CD8-positive, alpha-beta T cell (primary cell): ENCODE measurements at regions of chr17 and their contacts with region 1.

Region 1: DNA sequence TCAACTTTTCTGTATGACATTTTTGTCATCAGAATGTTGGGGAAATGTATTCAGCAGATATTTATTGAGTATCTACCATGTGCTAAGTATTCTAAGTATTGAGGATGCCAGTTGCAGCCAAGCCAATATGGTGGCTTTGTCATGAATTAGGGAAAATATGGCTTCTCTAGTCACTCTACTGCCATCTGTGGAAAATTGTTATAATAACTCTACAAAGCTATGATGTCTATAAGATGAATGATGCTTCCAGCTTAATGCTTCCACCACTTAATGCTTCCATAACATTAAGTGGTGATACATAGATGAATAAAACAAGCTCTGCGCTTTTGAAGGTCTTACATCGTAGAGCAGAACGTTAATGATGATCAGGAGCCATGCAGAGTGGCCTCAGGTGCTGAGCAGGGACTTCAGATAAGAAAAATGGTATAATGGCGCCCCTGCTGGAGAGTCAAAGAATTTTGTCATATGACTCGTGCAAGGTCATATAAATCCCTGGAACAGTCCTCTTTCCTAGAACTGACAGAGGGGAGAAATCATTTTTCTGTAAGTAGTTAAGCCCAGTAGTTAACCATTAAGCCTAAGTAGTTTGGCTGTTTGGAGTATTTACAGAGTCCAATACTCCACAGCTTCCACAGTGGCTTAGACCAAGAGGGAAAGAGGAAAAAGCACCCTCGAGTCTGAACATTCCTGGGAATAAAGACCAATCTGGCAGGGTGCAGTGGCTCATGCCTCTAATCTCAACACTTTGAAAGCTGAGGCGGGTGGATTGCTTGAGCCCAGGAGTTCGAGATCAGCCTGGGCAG is 2.7 kb upstream of the TMIGD1 start:
- DNase-seq: peak in 8 of 9 experiments; percentile 42 to 81 (median 62)
- ATAC-seq: peak; percentile 40
- H3K4me3 ChIP-seq: no peak overlapping the region
- H3K4me3 Mint-ChIP-seq: no peak overlapping the region
- H3K27ac ChIP-seq: no peak overlapping the region
- H3K27ac Mint-ChIP-seq: no peak overlapping the region
- H3K4me1 ChIP-seq: peaks cover 21% of the 10 kb centered on the region
- H3K4me1 Mint-ChIP-seq: peaks cover 30% of the 10 kb centered on the region
- H3K27me3 ChIP-seq: no peaks in the 10 kb centered on the region
- H3K27me3 Mint-ChIP-seq: no peaks in the 10 kb centered on the region
- CTCF ChIP-seq: peak; percentile 96

Region 2: DNA sequence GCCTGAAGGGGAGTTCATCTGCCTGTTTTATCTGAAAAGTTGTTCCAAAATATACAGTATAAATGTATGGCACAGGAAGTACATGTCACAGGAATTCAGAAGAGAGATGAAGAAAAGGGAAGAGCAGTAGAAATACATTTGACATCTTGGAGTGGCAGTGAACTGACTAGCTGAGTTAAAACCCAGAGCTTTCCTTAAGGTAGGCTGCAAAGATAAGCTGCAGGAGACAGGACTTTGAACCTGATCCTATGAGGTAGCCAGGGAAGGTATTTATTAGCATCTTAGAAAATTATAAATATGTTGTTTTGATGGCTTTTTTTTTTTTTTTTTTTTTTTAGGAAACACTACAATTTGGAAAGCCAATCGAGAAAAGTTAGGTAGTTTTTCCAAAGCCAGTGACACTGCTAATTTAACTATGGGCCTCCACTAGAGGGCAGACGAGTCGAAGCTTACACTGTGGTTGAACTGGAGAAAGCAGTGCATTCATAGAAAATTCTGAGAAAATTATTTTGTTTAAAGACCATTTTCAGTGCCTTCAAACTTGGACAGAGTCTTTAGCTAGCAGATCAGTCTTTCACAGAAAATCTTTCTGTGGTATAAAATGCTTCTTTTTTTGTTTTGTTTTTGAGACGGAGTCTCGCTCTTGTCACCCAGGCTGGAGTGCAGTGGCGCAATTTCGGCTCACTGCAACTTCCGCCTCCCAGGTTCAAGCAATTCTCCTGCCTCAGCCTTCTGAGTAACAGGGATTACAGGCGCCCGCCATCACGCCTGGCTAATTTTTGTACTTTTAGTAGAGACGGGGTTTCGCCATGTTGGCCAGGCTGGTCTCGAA is 528.8 kb before region 1 on chr17:
- CTCF ChIA-PET with region 1: no interaction called
- POLR2A ChIA-PET with region 1: no interaction called
- intact Hi-C with region 1: no loop called
- DNase-seq: peak; percentile 30 to 81 (median 73)
- ATAC-seq: peak; percentile 81
- H3K4me3 ChIP-seq: no peak overlapping the region
- H3K4me3 Mint-ChIP-seq: no peak overlapping the region
- H3K27ac ChIP-seq: no peak overlapping the region
- H3K27ac Mint-ChIP-seq: no peak overlapping the region
- H3K4me1 ChIP-seq: no peaks in the 10 kb centered on the region
- H3K4me1 Mint-ChIP-seq: peaks cover 15% of the 10 kb centered on the region
- H3K27me3 ChIP-seq: no peaks in the 10 kb centered on the region
- H3K27me3 Mint-ChIP-seq: no peaks in the 10 kb centered on the region
- CTCF ChIP-seq: peak; percentile 94

Region 3: DNA sequence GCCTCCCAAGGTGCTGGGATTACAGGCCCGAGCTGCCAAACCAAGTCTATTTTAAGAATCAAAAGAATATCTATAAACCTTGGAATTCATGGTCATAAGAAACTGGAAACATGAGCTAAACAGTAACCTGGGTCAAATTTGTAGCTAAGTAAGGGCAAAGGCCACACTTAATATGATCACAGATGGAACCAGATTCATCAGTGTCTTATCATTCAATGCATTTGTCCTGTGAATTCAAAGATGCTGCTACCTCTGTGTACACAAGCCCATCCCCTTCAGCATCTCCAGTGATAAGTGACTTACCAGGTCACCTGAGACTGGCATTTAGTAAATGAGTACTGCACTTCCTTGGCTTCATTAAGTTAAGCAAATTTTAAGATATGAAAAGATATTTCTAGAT is 514.7 kb before region 1 on chr17:
- CTCF ChIA-PET with region 1: no interaction called
- POLR2A ChIA-PET with region 1: no interaction called
- intact Hi-C with region 1: no loop called
- DNase-seq: no peak
- ATAC-seq: no peak
- H3K4me3 ChIP-seq: no peak overlapping the region
- H3K4me3 Mint-ChIP-seq: no peak overlapping the region
- H3K27ac ChIP-seq: no peak overlapping the region
- H3K27ac Mint-ChIP-seq: no peak overlapping the region
- H3K4me1 ChIP-seq: peaks cover 4% of the 10 kb centered on the region
- H3K4me1 Mint-ChIP-seq: peaks cover 20% of the 10 kb centered on the region
- H3K27me3 ChIP-seq: no peaks in the 10 kb centered on the region
- H3K27me3 Mint-ChIP-seq: no peaks in the 10 kb centered on the region
- CTCF ChIP-seq: no peak

Region 4: GRCh38 chr17:30104575-30105339 is 231.8 kb before region 1 on chr17:
- CTCF ChIA-PET with region 1: interaction called, 156 read pairs
- POLR2A ChIA-PET with region 1: no interaction called
- intact Hi-C with region 1: loop called (anchors 1 to 5 kb)
- DNase-seq: peak; percentile 44 to 85 (median 71)
- ATAC-seq: peak; percentile 95
- H3K4me3 ChIP-seq: peak overlapping the region; percentile 43 to 45
- H3K4me3 Mint-ChIP-seq: peak overlapping the region; percentile 85
- H3K27ac ChIP-seq: no peak overlapping the region
- H3K27ac Mint-ChIP-seq: no peak overlapping the region
- H3K4me1 ChIP-seq: no peaks in the 10 kb centered on the region
- H3K4me1 Mint-ChIP-seq: peaks cover 6% of the 10 kb centered on the region
- H3K27me3 ChIP-seq: no peaks in the 10 kb centered on the region
- H3K27me3 Mint-ChIP-seq: peaks cover 3% of the 10 kb centered on the region
- CTCF ChIP-seq: peak; percentile 93

Region 5: DNA sequence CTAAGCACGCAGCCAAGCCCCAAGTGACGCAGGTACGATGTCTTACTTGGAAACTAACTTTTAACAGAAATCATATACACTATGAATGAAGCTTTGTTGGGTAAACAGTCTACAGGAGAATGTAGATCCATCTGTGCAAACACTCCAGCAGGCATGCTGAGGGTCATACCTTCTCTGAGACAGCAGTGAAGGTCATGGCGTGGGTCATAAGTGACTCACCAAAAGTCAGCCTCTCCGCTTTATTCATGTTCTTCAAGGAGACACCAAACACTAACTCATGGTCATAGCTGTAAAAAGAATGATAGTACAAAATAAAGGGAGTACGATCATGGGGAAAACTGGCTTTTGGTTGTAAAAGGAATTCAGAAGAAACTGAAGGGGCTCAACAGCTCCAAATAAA is 65.5 kb before region 1 on chr17:
- CTCF ChIA-PET with region 1: interaction called, 15 read pairs
- POLR2A ChIA-PET with region 1: no interaction called
- intact Hi-C with region 1: loop called in 1 of 2 experiments (anchors 5 kb)
- DNase-seq: no peak
- ATAC-seq: no peak
- H3K4me3 ChIP-seq: no peak overlapping the region
- H3K4me3 Mint-ChIP-seq: no peak overlapping the region
- H3K27ac ChIP-seq: no peak overlapping the region
- H3K27ac Mint-ChIP-seq: no peak overlapping the region
- H3K4me1 ChIP-seq: no peaks in the 10 kb centered on the region
- H3K4me1 Mint-ChIP-seq: no peaks in the 10 kb centered on the region
- H3K27me3 ChIP-seq: no peaks in the 10 kb centered on the region
- H3K27me3 Mint-ChIP-seq: no peaks in the 10 kb centered on the region
- CTCF ChIP-seq: no peak

Region 6: DNA sequence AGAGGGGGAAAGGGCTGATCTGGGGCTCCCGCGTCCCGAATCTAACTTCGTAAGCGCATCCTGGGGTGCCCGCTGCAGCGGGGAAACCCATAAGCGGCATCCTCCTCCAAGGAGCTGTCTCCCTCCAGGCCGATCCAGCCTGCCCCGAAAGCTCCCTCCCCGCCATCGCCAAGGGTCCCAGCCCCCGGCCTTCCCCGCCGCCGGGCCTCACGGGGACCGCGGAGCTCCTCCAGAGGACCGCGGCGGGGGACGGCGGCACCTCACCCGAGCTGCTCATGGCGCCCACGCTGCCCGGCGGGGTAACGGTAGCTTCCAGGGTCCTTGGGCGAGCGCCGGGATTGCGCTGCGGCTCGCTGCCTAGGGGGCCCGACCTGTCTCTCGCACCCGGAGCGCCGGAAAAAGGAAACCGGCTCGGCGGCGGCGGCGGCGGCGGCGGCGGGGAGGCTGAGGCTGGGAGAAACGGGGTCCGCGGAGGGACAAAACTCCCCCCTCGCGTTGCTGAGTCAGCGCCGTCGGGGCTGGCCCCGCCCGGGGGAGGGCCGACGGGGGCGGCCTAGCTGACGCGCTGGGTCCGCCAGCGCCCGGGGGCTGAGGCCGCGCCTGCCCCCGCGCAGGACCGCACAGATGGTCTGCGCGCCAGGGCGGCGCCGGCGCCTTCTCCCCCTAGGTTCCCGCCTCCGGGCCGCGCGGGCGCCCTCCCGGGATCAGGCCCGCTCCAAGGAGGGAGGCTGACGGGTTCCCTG is 44.9 kb before region 1 on chr17 and contains the start of gene BLMH:
- CTCF ChIA-PET with region 1: interaction called, 57 read pairs
- POLR2A ChIA-PET with region 1: interaction called, 8 read pairs
- intact Hi-C with region 1: loop called (anchors 1 kb)
- DNase-seq: peak; percentile 54 to 89 (median 83)
- ATAC-seq: peak; percentile 88
- H3K4me3 ChIP-seq: peak within 1 kb of the TSS; percentile 88 to 91
- H3K4me3 Mint-ChIP-seq: peak within 1 kb of the TSS; percentile 93
- H3K27ac ChIP-seq: peak within 1 kb of the TSS; percentile 38 to 44
- H3K27ac Mint-ChIP-seq: peak within 1 kb of the TSS; percentile 88
- H3K4me1 ChIP-seq: peaks cover 19% of the 10 kb centered on the region
- H3K4me1 Mint-ChIP-seq: peaks cover 18% of the 10 kb centered on the region
- H3K27me3 ChIP-seq: no peaks in the 10 kb centered on the region
- H3K27me3 Mint-ChIP-seq: no peaks in the 10 kb centered on the region
- CTCF ChIP-seq: no peak
- total RNA-seq, gene BLMH: 32.6 to 33.3 TPM

Region 7: GRCh38 chr17:30323895-30324319 is 12.7 kb before region 1 on chr17:
- CTCF ChIA-PET with region 1: interaction called, 50 read pairs
- POLR2A ChIA-PET with region 1: interaction called, 7 read pairs
- intact Hi-C with region 1: loop called in 1 of 2 experiments (anchors 1 kb)
- DNase-seq: peak in 8 of 9 experiments; percentile 12 to 66 (median 46)
- ATAC-seq: peak; percentile 63
- H3K4me3 ChIP-seq: no peak overlapping the region
- H3K4me3 Mint-ChIP-seq: peak overlapping the region; percentile 11
- H3K27ac ChIP-seq: peak overlapping the region; percentile 0 to 60
- H3K27ac Mint-ChIP-seq: peak overlapping the region; percentile 91
- H3K4me1 ChIP-seq: peaks cover 24% of the 10 kb centered on the region
- H3K4me1 Mint-ChIP-seq: peaks cover 30% of the 10 kb centered on the region
- H3K27me3 ChIP-seq: no peaks in the 10 kb centered on the region
- H3K27me3 Mint-ChIP-seq: no peaks in the 10 kb centered on the region
- CTCF ChIP-seq: no peak

Region 8: DNA sequence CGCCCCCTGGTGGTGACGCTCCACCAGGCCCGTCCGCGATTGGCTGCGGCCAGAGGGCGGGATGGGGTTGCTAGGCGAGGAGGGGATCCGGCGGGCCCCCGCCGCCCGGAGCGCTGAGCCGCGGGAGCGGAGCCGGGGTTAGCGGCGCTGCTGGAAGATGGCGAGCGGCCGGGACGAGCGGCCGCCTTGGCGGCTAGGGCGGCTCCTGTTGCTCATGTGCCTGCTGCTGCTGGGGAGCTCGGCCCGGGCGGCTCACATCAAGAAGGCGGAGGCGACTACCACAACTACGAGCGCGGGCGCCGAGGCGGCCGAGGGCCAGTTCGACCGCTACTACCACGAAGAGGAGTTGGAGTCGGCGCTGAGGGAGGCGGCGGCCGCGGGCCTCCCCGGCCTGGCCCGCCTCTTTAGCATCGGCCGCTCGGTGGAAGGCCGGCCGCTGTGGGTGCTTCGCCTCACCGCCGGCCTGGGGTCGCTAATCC is 42.3 kb after region 1 on chr17 and contains the start of gene CPD:
- CTCF ChIA-PET with region 1: interaction called, 19 read pairs
- POLR2A ChIA-PET with region 1: interaction called, 7 read pairs
- intact Hi-C with region 1: loop called (anchors 1 to 2 kb)
- DNase-seq: peak; percentile 92 to 99 (median 98)
- ATAC-seq: peak; percentile 93
- H3K4me3 ChIP-seq: peak within 1 kb of the TSS; percentile 51 to 76
- H3K4me3 Mint-ChIP-seq: peak within 1 kb of the TSS; percentile 88
- H3K27ac ChIP-seq: peak within 1 kb of the TSS; percentile 65 to 94
- H3K27ac Mint-ChIP-seq: peak within 1 kb of the TSS; percentile 93
- H3K4me1 ChIP-seq: peaks cover 53% of the 10 kb centered on the region
- H3K4me1 Mint-ChIP-seq: peaks cover 56% of the 10 kb centered on the region
- H3K27me3 ChIP-seq: no peaks in the 10 kb centered on the region
- H3K27me3 Mint-ChIP-seq: no peaks in the 10 kb centered on the region
- CTCF ChIP-seq: no peak
- total RNA-seq, gene CPD: 40.9 to 42.1 TPM

Region 9: DNA sequence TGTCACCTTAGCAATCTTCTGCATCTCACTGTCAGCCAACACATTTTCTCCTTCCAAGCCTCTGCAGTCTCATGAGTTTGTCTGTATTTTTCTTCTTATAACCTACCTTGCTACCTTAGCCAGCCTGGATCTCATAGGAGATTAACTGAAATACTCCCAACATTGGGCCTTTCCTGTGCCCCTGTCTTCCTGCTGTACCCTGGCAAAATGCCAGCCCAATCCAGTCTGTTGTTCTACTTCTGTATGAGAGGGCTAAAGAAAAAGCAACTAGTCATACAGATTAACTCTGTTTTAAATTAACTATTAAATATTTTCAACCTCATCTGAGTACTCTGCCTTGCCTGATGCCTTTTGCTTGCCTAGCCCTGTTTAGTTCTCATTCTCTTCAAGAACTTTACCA is 159.0 kb after region 1 on chr17:
- CTCF ChIA-PET with region 1: no interaction called
- POLR2A ChIA-PET with region 1: no interaction called
- intact Hi-C with region 1: no loop called
- DNase-seq: no peak
- ATAC-seq: no peak
- H3K4me3 ChIP-seq: no peak overlapping the region
- H3K4me3 Mint-ChIP-seq: no peak overlapping the region
- H3K27ac ChIP-seq: no peak overlapping the region
- H3K27ac Mint-ChIP-seq: no peak overlapping the region
- H3K4me1 ChIP-seq: no peaks in the 10 kb centered on the region
- H3K4me1 Mint-ChIP-seq: peaks cover 23% of the 10 kb centered on the region
- H3K27me3 ChIP-seq: no peaks in the 10 kb centered on the region
- H3K27me3 Mint-ChIP-seq: no peaks in the 10 kb centered on the region
- CTCF ChIP-seq: no peak

Region 10: DNA sequence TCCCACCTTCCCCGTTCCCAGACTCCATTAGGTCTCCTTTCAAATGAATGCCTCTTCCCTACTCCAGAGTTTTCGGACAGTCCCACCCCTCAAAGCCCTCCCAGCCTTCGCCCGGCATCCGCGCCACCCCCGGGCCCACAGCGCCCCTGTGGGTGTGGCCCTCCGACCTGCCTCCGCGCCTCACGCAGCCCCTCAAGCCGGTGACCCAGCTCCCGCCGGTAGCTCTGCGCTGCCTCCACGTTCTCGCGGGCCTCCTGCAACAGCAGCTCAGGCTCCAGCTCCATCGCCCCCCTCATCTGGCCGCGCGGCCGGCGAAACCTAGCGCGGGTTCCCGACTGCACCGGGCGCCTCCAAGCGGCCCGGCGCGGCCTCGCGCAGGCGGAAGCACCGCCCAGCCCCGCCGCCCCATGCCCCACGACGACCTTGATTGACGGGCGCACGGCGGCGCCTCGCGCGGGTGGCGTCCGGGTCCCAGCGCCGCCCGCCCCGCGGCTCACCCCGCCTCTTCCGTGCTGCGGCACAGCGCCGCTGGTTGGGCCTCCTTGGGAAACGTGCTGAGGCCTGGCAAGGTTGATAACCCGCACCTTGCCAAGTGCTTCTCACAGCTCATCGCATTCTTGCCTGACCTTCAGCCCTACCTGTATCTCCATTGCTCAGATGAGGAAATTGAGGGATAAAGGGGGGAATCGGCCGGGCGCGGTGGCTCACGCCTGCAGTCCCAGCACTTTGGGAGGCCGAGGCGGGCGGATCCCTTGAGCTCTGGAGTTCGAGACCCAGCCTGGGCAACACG is 488.0 kb after region 1 on chr17 and contains the start of gene CRLF3:
- CTCF ChIA-PET with region 1: no interaction called
- POLR2A ChIA-PET with region 1: no interaction called
- intact Hi-C with region 1: no loop called
- DNase-seq: peak; percentile 80 to 96 (median 88)
- ATAC-seq: peak; percentile 90
- H3K4me3 ChIP-seq: peak within 1 kb of the TSS; percentile 82 to 96
- H3K4me3 Mint-ChIP-seq: peak within 1 kb of the TSS; percentile 92
- H3K27ac ChIP-seq: peak within 1 kb of the TSS; percentile 79 to 87
- H3K27ac Mint-ChIP-seq: peak within 1 kb of the TSS; percentile 88
- H3K4me1 ChIP-seq: peaks cover 42% of the 10 kb centered on the region
- H3K4me1 Mint-ChIP-seq: peaks cover 42% of the 10 kb centered on the region
- H3K27me3 ChIP-seq: no peaks in the 10 kb centered on the region
- H3K27me3 Mint-ChIP-seq: no peaks in the 10 kb centered on the region
- CTCF ChIP-seq: peak; percentile 62
- total RNA-seq, gene CRLF3: 60.5 to 60.7 TPM